BJ (cell line): ENCODE measurements at regions of chr7 and their contacts with region 1.

Region 1: GRCh38 chr7:158856883-158857668 is 718 bp downstream of the DYNC2I1 start:
- DNase-seq: no peak
- H3K4me3 ChIP-seq: peak overlapping the region; percentile 78
- H3K27me3 ChIP-seq: no peaks in the 10 kb centered on the region
- CTCF ChIP-seq: no peak

Region 2: DNA sequence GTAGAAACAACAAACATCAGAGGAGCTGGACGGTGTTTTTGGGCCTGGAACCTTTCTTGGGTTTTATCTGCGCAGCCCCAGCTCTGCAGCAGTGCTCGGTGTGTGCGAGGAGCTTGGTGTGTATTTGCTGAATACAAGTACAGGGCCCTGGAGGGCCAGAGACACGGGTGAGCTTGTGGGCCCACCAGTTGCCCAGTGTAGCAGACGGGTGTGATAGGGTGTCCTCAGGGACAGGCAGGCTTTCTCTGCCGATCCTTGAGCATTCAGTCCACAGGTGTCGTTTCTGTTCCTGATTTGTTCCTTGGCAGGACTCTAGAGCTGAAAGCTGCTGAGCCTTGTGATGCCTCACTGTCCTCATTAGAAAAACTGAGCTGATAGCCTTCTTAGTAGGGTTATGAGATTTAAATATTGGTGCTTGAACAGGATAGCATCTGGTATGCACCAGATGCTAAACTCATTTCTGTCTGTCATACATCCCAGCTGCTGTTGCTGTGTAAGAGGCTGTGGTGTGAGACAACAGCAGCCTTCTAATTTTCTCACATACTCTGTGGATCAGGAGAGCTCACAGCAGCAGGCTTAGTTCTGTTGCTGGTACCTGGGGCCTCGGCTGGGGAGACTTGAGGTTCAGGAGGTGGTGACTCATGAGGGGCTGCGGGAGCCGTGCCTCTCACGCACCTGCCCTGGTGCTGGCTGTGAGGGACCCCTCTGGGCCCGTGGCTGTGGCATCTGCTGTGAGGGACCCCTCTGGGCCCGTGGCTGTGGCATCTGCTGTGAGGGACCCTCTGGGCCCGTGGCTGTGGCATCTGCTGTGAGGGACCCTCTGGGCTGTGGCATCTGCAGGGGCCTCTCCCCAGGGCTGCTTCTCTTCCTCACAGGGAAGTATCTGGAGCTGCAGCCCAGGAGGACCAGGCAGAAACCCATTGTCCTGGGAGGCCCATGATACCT is 11.7 kb after region 1 on chr7:
- CTCF ChIA-PET with region 1: interaction called, 4 read pairs
- POLR2A ChIA-PET with region 1: interaction called, 18 read pairs
- DNase-seq: no peak
- H3K4me3 ChIP-seq: no peak overlapping the region
- H3K27me3 ChIP-seq: no peaks in the 10 kb centered on the region
- CTCF ChIP-seq: no peak